Colonic mucosa (tissue), 4 donors: ENCODE measurements at regions of chr3 and their contacts with region 1.

Region 1: GRCh38 chr3:132535575-132536441 is 61.3 kb upstream of the ACKR4 start:
- DNase-seq: peak; percentile 54
- H3K4me3 ChIP-seq: no peak overlapping the region
- H3K27ac ChIP-seq: no peak overlapping the region
- H3K4me1 ChIP-seq: no peaks in the 10 kb centered on the region
- H3K27me3 ChIP-seq: no peaks in the 10 kb centered on the region
- CTCF ChIP-seq: peak; percentile 63

Region 2: DNA sequence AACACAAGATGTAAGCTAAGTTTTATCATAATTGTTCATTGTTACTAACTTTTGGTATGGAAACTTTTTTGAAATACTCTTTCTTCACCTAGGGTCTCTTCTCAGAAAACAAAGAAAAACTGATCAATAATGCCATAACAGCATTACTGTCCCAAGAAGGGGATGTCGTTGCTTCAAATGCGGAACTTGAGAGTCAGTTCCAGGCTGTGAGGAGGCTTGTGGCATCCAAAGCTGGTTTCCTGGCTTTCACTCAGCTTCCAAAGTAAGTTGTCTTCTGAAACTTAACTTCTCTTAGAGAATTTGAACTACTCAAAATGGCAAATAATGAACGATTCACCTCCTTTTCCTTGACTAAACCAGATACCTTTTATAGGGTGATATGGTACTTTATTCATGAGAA is 79.2 kb before region 1 on chr3:
- intact Hi-C with region 1: no loop called
- DNase-seq: no peak
- H3K4me3 ChIP-seq: no peak overlapping the region
- H3K27ac ChIP-seq: no peak overlapping the region
- H3K4me1 ChIP-seq: no peaks in the 10 kb centered on the region
- H3K27me3 ChIP-seq: no peaks in the 10 kb centered on the region
- CTCF ChIP-seq: no peak

Region 3: GRCh38 chr3:132469326-132469725 is 66.5 kb before region 1 on chr3:
- intact Hi-C with region 1: no loop called
- DNase-seq: no peak
- H3K4me3 ChIP-seq: no peak overlapping the region
- H3K27ac ChIP-seq: no peak overlapping the region
- H3K4me1 ChIP-seq: no peaks in the 10 kb centered on the region
- H3K27me3 ChIP-seq: no peaks in the 10 kb centered on the region
- CTCF ChIP-seq: no peak

Region 4: DNA sequence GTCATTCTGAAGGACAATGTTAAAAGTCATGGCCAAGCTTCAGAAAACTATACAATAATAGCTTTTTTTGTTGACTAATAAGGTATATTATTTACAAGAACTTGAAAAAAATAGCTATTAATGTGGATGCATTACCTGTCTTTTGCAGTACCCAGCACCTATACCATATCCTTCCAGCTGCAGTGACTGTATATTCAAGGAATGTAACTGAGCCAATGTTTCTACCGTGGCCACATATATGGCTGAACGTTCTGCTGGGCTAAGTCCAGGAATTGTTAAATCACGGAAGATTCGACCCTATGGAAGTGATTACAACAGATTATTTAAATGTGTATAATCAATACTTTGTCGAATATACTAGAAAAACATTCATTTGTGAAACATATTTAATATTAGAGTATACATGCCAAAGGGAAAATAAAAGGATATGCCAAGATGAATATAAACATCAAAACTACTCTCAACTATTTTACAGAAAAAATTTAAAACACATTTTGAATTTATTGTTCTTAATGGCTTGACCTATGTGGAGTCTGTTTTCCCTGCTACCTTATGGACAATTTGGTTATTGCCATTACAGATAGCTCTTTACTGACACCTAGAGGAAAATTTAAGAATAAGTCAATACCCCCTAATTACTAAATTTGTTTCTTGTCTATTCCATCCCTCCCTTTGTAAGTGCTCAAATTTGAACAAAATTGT is 106.2 kb after region 1 on chr3:
- intact Hi-C with region 1: loop called (anchors 2 kb)
- DNase-seq: no peak
- H3K4me3 ChIP-seq: no peak overlapping the region
- H3K27ac ChIP-seq: no peak overlapping the region
- H3K4me1 ChIP-seq: no peaks in the 10 kb centered on the region
- H3K27me3 ChIP-seq: no peaks in the 10 kb centered on the region
- CTCF ChIP-seq: peak; percentile 78

Region 5: DNA sequence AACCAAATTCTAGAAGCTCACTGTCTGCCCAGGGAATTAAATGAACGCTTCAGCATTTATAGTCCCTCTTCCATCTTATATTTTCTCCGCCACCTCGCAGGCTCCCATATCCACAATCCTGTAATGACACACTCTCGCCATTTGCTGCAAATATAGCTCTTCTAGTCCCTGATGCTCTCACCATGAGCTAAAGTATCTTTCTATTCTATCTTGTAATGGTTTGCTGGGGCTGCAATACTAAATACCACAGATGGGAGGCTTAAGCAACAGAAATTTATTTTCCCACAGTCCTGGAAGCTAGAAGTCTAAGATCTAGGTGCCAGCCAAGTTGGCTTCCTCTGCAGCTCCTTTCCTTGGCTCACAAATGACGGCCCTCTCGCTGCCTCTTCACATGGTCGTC is 293.3 kb after region 1 on chr3:
- intact Hi-C with region 1: no loop called
- DNase-seq: no peak
- H3K4me3 ChIP-seq: no peak overlapping the region
- H3K27ac ChIP-seq: no peak overlapping the region
- H3K4me1 ChIP-seq: no peaks in the 10 kb centered on the region
- H3K27me3 ChIP-seq: no peaks in the 10 kb centered on the region
- CTCF ChIP-seq: no peak